ENCODE measurements at regions of chr2 and their contacts with region 1.

Region 1: DNA sequence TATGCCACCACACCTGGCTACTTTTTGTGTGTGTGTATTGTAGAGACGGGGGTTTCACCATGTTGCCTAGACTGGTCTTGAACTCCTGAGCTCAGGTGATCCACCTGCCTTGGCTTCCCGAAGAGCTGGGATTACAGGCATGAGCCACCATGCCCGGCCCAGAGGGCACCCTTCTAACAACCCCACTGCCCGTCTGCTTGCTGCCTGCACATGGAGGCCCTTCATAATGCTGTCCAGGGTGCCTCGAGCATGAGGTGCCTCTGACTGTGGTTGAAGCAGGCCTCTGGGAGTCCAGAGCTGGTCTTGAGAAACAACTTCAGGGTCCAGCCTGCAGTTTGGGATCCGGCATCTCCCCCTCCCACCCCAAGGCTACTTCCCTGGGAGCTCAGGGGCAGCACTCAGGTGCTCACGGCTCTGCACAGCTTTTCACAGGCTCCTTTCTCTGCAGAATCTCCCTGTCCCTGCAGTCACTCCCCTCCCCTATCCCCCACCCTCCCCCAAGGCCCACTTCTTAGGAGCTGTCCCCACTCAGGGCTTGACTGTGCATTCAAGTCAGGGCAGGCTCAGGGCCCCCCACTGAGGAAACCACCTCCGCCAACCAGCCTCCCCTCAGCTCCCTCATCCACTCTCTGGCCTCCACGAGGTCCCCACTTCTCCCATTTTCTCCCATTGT is 8.0 kb downstream of the NMUR1 start:
- DNase-seq: no peak
- ATAC-seq: no peak
- H3K4me3 ChIP-seq: no peak overlapping the region
- H3K4me3 Mint-ChIP-seq: no peak overlapping the region
- H3K27ac ChIP-seq: no peak overlapping the region
- H3K27ac Mint-ChIP-seq: no peak overlapping the region
- H3K4me1 ChIP-seq: peaks cover 0 to 46% of the 10 kb centered on the region in 2 experiments
- H3K4me1 Mint-ChIP-seq: peaks cover 23 to 48% (median 27%) of the 10 kb centered on the region in 3 donors
- H3K27me3 ChIP-seq: no peaks in the 10 kb centered on the region
- H3K27me3 Mint-ChIP-seq: no peaks in the 10 kb centered on the region

Region 2: DNA sequence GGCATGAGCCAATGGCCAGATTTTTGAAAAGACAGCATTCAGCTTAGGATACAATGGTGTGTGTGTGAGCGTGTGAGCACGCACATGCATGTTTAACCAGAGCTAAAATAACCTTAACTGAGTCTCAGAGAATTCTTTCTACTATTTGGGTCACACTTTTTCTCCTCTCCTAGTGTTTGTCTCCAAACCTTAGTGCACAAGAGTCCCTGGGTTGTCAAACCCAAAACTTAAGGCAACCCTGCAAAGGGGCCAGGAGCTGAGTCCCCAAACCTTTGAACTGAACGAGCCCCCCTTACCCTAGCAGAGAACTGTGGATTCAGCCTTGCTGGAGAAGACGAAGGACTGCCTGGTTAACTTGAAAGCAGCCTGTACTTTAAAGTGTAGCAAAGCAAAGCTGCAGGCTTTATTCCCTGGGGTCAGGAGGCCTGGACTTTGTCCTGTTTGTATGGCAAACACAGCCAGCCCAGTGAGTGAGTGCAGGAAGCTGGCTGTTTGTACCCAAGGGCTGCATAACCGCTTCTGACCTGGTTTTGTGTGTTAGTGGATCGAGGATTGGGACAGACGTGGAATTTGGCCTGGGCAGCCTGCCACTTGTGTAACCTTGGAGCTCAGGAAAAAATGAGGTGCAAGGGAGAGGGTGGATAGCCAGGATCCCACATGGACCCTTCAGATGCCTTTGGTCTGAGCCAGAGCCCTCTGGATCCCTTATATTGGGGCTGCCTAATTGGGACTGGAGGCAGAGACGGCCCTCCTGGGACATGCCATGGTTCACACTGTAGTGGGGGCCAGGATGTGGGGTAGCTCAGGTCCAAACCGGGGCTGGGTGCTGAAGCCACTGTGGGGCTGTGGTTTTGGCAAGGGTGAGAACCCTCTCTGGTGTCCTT is 472.0 kb before region 1 on chr2:
- CTCF ChIA-PET with region 1: no interaction called
- POLR2A ChIA-PET with region 1: no interaction called
- DNase-seq: peak in 1 of 35 experiments; percentile 14
- ATAC-seq: no peak
- H3K4me3 ChIP-seq: no peak overlapping the region
- H3K4me3 Mint-ChIP-seq: no peak overlapping the region
- H3K27ac ChIP-seq: no peak overlapping the region
- H3K27ac Mint-ChIP-seq: no peak overlapping the region
- H3K4me1 ChIP-seq: peaks cover 3 to 28% of the 10 kb centered on the region in 2 experiments
- H3K4me1 Mint-ChIP-seq: peaks cover 20 to 23% (median 21%) of the 10 kb centered on the region in 3 donors
- H3K27me3 ChIP-seq: peaks cover 2 to 37% of the 10 kb centered on the region in 2 experiments
- H3K27me3 Mint-ChIP-seq: peaks cover 6 to 7% of the 10 kb centered on the region in 2 donors

Region 3: DNA sequence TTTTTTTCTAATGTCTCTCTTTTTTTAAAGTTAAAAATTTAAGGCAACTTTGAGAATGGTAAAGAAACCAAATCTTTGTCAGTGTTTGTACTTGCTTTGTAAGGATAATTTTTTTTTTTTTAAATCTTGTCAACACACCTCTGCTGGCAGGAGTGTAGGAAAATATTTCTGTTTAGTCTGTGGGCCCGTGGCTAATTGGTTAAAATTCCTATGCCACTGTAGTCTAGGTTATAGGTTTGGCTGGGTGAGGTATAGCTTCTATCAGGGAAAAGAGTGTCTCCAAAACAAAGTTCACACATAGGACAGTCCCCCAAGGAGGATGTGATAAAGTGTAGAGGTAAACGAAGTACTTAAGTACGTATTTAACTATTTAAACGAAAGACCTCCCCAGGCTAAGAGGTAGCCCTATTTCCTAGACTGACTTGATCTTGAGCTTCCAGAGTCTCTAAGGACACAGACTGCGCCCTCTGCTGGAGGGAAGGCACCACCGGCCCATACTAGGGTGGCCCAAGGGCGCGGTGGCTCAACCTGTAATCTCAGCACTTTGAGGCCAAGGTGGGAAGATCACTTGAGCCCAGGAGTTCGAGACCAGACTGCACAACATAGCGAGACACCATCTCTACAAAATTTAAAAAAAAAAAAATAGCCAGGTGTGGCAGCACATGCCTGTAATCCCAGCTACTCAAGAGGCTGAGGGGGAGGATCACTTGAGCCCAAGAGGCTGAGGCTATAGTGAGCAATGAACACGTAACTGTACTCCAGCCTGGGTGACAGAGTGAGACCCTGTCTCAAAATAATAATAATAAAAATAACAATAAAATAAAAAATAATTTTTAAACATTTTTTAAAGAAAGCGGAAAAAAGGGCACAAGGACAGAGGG is 79.3 kb after region 1 on chr2:
- CTCF ChIA-PET with region 1: interaction called in 1 of 2 experiments, 14 read pairs
- POLR2A ChIA-PET with region 1: no interaction called
- DNase-seq: peak; percentile 32 to 88 (median 68)
- ATAC-seq: peak; percentile 28 to 53 (median 46)
- H3K4me3 ChIP-seq: no peak overlapping the region
- H3K4me3 Mint-ChIP-seq: no peak overlapping the region
- H3K27ac ChIP-seq: no peak overlapping the region
- H3K27ac Mint-ChIP-seq: peak overlapping the region in 1 of 2 donors; percentile 54
- H3K4me1 ChIP-seq: peaks cover 4 to 22% of the 10 kb centered on the region in 2 experiments
- H3K4me1 Mint-ChIP-seq: peaks cover 8 to 19% (median 8%) of the 10 kb centered on the region in 3 donors
- H3K27me3 ChIP-seq: peaks cover 0 to 20% of the 10 kb centered on the region in 2 experiments
- H3K27me3 Mint-ChIP-seq: no peaks in the 10 kb centered on the region

Measured in T-cell (primary cell).